Naive thymus-derived CD4-positive, alpha-beta T cell (primary cell): ENCODE measurements at regions of chr11 and their contacts with region 1.

Region 1: DNA sequence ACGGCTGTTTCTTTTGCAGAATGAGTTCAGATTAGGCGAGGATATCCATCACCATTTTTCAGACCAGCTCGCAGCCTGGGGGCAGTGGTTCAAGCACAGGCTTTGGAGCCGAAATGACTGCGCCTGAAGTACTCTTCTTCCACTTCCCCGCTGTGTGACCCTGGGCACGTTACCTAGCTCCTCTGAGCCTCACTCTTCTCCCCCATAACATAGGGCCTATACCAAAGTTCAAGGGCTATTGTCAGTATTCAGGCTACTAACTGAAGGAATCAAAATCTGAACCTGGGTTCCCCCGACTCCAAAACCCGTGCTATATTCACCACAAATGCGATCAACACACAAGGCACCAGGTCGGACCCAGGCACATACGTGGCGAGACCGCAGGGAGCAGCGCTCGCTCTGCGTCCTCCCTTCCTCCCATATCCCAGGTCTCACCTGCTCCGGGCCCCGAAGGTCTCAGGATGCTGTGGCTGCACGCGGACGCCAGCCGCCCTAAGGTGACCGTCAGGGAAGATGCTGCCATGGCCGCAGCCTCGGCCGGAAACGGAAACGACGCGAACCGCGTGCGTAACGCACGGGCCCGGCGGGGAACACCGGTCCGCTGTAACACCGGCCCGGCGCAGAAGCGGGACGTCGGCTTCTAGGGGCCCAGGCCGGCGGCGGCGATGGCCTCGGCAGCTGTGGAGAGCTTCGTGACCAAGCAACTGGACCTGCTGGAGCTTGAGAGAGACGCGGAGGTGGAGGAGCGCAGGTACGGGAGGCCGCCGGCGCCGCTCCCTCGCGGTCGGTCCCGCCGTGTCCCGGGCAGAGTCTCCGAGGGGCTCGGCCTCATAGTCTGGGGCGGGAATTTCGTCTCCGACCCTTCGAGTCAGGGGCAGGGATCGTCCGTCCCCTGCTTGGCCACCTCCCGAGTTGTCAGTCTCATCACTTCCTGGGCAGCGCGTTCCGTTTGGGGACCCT is at the starts of genes IGHMBP2 and MRPL21:
- DNase-seq: peak; percentile 70 to 90 (median 83)
- ATAC-seq: peak; percentile 99
- H3K4me3 ChIP-seq: peak within 1 kb of the TSS; percentile 91
- H3K4me3 Mint-ChIP-seq: peak within 1 kb of the TSS; percentile 90 to 98 (median 96)
- H3K27ac ChIP-seq: peak within 1 kb of the TSS; percentile 90
- H3K27ac Mint-ChIP-seq: peak within 1 kb of the TSS; percentile 89 to 95 (median 93)
- H3K4me1 ChIP-seq: peaks cover 21% of the 10 kb centered on the region in 2 donors
- H3K4me1 Mint-ChIP-seq: peaks cover 35 to 62% (median 48%) of the 10 kb centered on the region in 7 donors
- H3K27me3 ChIP-seq: no peaks in the 10 kb centered on the region
- H3K27me3 Mint-ChIP-seq: no peaks in the 10 kb centered on the region
- total RNA-seq, gene IGHMBP2: 27.5 to 41.4 (median 32.2) TPM
- total RNA-seq, gene MRPL21: 29.6 to 71.1 (median 37.9) TPM

Region 2: GRCh38 chr11:67674442-67674901 is 1229.1 kb before region 1 on chr11 and contains the start of gene ALDH3B2:
- CTCF ChIA-PET with region 1: no interaction called
- POLR2A ChIA-PET with region 1: no interaction called
- intact Hi-C with region 1: no loop called
- DNase-seq: no peak
- ATAC-seq: no peak
- H3K4me3 ChIP-seq: no peak within 1 kb of the TSS
- H3K4me3 Mint-ChIP-seq: no peak within 1 kb of the TSS
- H3K27ac ChIP-seq: no peak within 1 kb of the TSS
- H3K27ac Mint-ChIP-seq: no peak within 1 kb of the TSS
- H3K4me1 ChIP-seq: no peaks in the 10 kb centered on the region
- H3K4me1 Mint-ChIP-seq: no peaks in the 10 kb centered on the region
- H3K27me3 ChIP-seq: no peaks in the 10 kb centered on the region
- H3K27me3 Mint-ChIP-seq: peaks cover 0 to 14% (median 0%) of the 10 kb centered on the region in 5 donors
- total RNA-seq, gene ALDH3B2: not detected

Region 3: GRCh38 chr11:68690671-68691401 is 212.7 kb before region 1 on chr11:
- CTCF ChIA-PET with region 1: no interaction called
- POLR2A ChIA-PET with region 1: no interaction called
- intact Hi-C with region 1: no loop called
- DNase-seq: peak in 6 of 9 donors; percentile 20 to 52 (median 44)
- ATAC-seq: peak; percentile 73
- H3K4me3 ChIP-seq: peak overlapping the region; percentile 10
- H3K4me3 Mint-ChIP-seq: peak overlapping the region; percentile 37 to 82 (median 76)
- H3K27ac ChIP-seq: no peak overlapping the region
- H3K27ac Mint-ChIP-seq: peak overlapping the region in 7 of 9 donors; percentile 10 to 88 (median 51)
- H3K4me1 ChIP-seq: peaks cover 17 to 20% of the 10 kb centered on the region in 2 donors
- H3K4me1 Mint-ChIP-seq: peaks cover 17 to 31% (median 28%) of the 10 kb centered on the region in 7 donors
- H3K27me3 ChIP-seq: no peaks in the 10 kb centered on the region
- H3K27me3 Mint-ChIP-seq: peaks cover 8 to 68% (median 29%) of the 10 kb centered on the region in 5 donors

Region 4: DNA sequence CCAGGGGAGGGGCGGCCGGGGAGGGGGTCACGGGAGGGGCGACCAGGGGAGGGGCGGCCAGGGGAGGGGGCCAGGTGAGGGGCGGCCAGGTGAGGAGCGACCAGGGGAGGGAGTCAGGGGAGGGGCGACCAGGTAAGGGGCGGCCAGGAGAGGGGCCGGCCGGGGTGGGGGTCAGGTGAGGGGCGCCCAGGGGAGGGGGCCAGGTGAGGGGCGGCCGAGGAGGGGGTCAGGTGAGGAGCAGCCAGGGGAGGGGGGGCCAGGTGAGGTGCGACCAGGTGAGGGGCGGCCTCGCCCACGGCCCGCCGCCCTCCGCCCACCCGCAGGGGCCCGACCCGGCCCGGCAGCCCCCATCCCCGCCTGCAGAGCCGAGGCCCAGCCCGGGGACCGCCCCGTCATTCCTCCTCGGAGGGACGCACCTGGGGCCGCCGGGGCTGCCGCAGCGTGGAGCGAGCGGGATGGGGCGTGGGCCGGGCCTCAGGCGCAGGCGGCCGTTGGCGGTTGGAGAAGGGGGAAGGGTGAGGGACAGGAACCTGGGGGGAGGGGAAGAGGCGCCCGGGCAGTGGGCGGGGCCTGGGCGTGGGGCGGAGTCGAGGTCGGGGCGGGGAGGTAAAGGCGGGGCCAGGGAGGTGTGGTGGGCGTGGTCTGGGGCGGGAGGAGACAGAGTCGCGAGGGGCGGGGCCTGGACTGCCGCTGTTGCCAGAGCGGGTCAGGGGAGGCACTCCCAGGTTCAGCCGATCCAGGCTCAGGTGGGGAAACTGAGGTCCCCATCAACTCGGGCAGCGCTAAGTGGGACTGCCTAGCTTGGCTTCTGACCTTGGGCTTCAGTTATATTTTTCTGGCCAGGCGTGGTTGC is 152.3 kb before region 1 on chr11 and contains the start of gene TESMIN:
- CTCF ChIA-PET with region 1: no interaction called
- POLR2A ChIA-PET with region 1: no interaction called
- intact Hi-C with region 1: loop called (anchors 5 kb)
- DNase-seq: peak; percentile 73 to 97 (median 88)
- ATAC-seq: peak; percentile 99
- H3K4me3 ChIP-seq: peak within 1 kb of the TSS; percentile 54
- H3K4me3 Mint-ChIP-seq: peak within 1 kb of the TSS; percentile 65 to 90 (median 78)
- H3K27ac ChIP-seq: no peak within 1 kb of the TSS
- H3K27ac Mint-ChIP-seq: peak within 1 kb of the TSS in 8 of 9 donors; percentile 5 to 84 (median 66)
- H3K4me1 ChIP-seq: no peaks in the 10 kb centered on the region
- H3K4me1 Mint-ChIP-seq: peaks cover 7 to 19% (median 13%) of the 10 kb centered on the region in 7 donors
- H3K27me3 ChIP-seq: no peaks in the 10 kb centered on the region
- H3K27me3 Mint-ChIP-seq: peaks cover 0 to 7% (median 0%) of the 10 kb centered on the region in 5 donors
- total RNA-seq, gene TESMIN: 5.0 to 9.3 (median 6.6) TPM

Region 5: GRCh38 chr11:68962527-68963250 is 59.1 kb after region 1 on chr11:
- CTCF ChIA-PET with region 1: no interaction called
- POLR2A ChIA-PET with region 1: no interaction called
- intact Hi-C with region 1: loop called in 1 of 2 experiments (anchors 5 kb)
- DNase-seq: peak in 7 of 9 donors; percentile 28 to 64 (median 46)
- ATAC-seq: peak; percentile 70
- H3K4me3 ChIP-seq: no peak overlapping the region
- H3K4me3 Mint-ChIP-seq: peak overlapping the region; percentile 31 to 78 (median 64)
- H3K27ac ChIP-seq: peak overlapping the region; percentile 42
- H3K27ac Mint-ChIP-seq: peak overlapping the region; percentile 47 to 97 (median 90)
- H3K4me1 ChIP-seq: peaks cover 3 to 15% of the 10 kb centered on the region in 2 donors
- H3K4me1 Mint-ChIP-seq: peaks cover 0 to 39% (median 17%) of the 10 kb centered on the region in 7 donors
- H3K27me3 ChIP-seq: no peaks in the 10 kb centered on the region
- H3K27me3 Mint-ChIP-seq: peaks cover 0 to 2% (median 0%) of the 10 kb centered on the region in 5 donors

Region 6: GRCh38 chr11:69088676-69089146 is 185.1 kb after region 1 on chr11:
- CTCF ChIA-PET with region 1: no interaction called
- POLR2A ChIA-PET with region 1: no interaction called
- intact Hi-C with region 1: loop called (anchors 2 to 5 kb)
- DNase-seq: peak in 7 of 9 donors; percentile 23 to 54 (median 38)
- ATAC-seq: peak; percentile 78
- H3K4me3 ChIP-seq: no peak overlapping the region
- H3K4me3 Mint-ChIP-seq: no peak overlapping the region
- H3K27ac ChIP-seq: no peak overlapping the region
- H3K27ac Mint-ChIP-seq: peak overlapping the region in 2 of 9 donors; percentile 19 to 36
- H3K4me1 ChIP-seq: no peaks in the 10 kb centered on the region
- H3K4me1 Mint-ChIP-seq: peaks cover 0 to 9% (median 0%) of the 10 kb centered on the region in 7 donors
- H3K27me3 ChIP-seq: no peaks in the 10 kb centered on the region
- H3K27me3 Mint-ChIP-seq: no peaks in the 10 kb centered on the region

Region 7: DNA sequence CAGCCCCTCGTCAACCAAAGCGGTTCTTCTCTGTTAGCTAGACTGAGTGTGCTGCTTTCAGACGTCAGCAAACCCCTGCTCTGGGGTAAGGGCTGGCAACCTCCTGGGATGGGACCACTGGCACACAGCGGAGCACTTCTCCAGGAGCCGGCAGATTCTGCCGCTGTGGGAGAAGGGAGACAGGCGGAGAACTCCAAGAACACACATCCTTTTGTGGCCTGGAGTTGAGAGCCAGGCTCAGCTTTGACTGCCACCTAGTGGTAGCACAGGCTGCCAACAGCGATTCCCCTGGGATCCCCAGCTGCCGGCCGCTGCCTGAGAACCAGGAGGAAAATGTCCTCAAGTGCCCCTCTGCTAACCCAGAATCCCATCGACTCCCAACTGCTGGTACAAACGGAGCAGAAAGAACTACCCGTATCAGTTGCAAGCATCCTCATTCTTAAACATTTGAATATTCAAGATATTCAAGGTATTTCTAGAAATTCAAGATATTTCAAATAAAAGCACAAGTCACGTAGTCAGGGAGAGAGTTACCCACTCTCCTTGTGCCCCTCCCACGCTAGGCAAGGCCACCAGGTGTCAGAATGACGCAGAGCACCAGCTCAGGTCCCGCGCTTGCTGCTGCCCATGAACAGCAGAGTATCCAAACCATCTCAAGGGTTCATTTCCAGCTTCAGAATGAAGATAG is 766.7 kb after region 1 on chr11:
- CTCF ChIA-PET with region 1: no interaction called
- POLR2A ChIA-PET with region 1: no interaction called
- intact Hi-C with region 1: loop called in 1 of 2 experiments (anchors 10 kb)
- DNase-seq: peak; percentile 25 to 57 (median 43)
- ATAC-seq: peak; percentile 36
- H3K4me3 ChIP-seq: no peak overlapping the region
- H3K4me3 Mint-ChIP-seq: no peak overlapping the region
- H3K27ac ChIP-seq: no peak overlapping the region
- H3K27ac Mint-ChIP-seq: peak overlapping the region in 6 of 9 donors; percentile 5 to 84 (median 65)
- H3K4me1 ChIP-seq: peaks cover 15 to 19% of the 10 kb centered on the region in 2 donors
- H3K4me1 Mint-ChIP-seq: peaks cover 24 to 42% (median 33%) of the 10 kb centered on the region in 7 donors
- H3K27me3 ChIP-seq: no peaks in the 10 kb centered on the region
- H3K27me3 Mint-ChIP-seq: peaks cover 0 to under 1% (median 0%) of the 10 kb centered on the region in 5 donors